ENCODE measurements at regions of chrX and their contacts with region 1.

Region 1: GRCh38 chrX:141314484-141315100 is 72.3 kb upstream of the SPANXC start:
- DNase-seq: no peak
- ATAC-seq: no peak
- H3K4me3 ChIP-seq: no peak overlapping the region
- H3K27ac ChIP-seq: no peak overlapping the region
- H3K4me1 ChIP-seq: no peaks in the 10 kb centered on the region
- H3K27me3 ChIP-seq: no peaks in the 10 kb centered on the region
- CTCF ChIP-seq: no peak

Region 2: GRCh38 chrX:141133251-141133650 is 181.3 kb before region 1 on chrX:
- intact Hi-C with region 1: no loop called
- DNase-seq: no peak
- ATAC-seq: no peak
- H3K4me3 ChIP-seq: no peak overlapping the region
- H3K27ac ChIP-seq: no peak overlapping the region
- H3K4me1 ChIP-seq: no peaks in the 10 kb centered on the region
- H3K27me3 ChIP-seq: no peaks in the 10 kb centered on the region
- CTCF ChIP-seq: no peak

Region 3: GRCh38 chrX:141258080-141258479 is 56.5 kb before region 1 on chrX:
- intact Hi-C with region 1: loop called in 1 of 10 experiments (anchors 10 kb)
- DNase-seq: no peak
- ATAC-seq: no peak
- H3K4me3 ChIP-seq: no peak overlapping the region
- H3K27ac ChIP-seq: no peak overlapping the region
- H3K4me1 ChIP-seq: no peaks in the 10 kb centered on the region
- H3K27me3 ChIP-seq: no peaks in the 10 kb centered on the region
- CTCF ChIP-seq: no peak

Measured in heart right ventricle (tissue), 16 donors.